ENCODE measurements at regions of chr12 and their contacts with region 1.

Region 1: DNA sequence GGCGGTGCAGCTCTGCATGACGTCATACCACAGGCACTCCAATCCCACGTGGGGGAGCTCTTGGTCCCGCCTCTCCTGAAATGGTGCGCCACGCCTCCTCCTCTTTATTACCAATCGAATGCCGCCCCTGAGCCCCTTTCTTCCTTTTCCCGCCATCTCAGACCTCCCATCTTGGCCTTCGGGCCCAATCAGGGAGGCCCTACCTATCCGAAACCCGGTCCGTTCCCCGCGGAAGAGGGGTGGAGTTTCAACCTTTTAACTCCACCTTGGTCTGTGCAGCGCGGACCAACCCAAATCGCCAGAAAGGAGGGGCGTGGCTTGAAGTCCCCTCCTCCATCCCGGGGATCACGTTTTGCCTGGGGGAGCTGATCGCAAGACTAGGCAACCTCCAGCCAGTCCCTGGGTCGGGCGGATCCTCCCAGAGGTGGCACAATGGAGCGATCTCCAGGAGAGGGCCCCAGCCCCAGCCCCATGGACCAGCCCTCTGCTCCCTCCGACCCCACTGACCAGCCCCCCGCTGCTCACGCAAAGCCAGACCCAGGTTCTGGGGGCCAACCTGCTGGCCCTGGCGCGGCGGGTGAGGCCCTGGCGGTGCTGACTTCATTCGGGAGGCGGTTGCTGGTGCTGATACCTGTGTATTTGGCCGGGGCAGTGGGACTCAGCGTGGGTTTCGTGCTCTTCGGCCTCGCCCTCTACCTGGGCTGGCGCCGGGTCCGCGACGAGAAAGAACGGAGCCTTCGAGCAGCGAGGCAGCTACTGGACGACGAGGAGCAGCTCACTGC is at the start of gene ESYT1:
- DNase-seq: peak; percentile 94 to 99 (median 99)
- H3K4me3 ChIP-seq: peak within 1 kb of the TSS; percentile 90
- H3K4me3 Mint-ChIP-seq: peak within 1 kb of the TSS; percentile 86 to 99 (median 98)
- H3K27ac ChIP-seq: peak within 1 kb of the TSS; percentile 90
- H3K27ac Mint-ChIP-seq: peak within 1 kb of the TSS; percentile 90 to 99 (median 98)
- H3K4me1 ChIP-seq: peaks cover 50% of the 10 kb centered on the region
- H3K4me1 Mint-ChIP-seq: peaks cover 59 to 71% (median 69%) of the 10 kb centered on the region in 3 donors
- H3K27me3 ChIP-seq: no peaks in the 10 kb centered on the region
- H3K27me3 Mint-ChIP-seq: peaks cover 0 to 2% of the 10 kb centered on the region in 2 donors
- total RNA-seq, gene ESYT1: 185 to 191 TPM

Region 2: GRCh38 chr12:56104109-56104814 is 23.8 kb before region 1 on chr12 and contains the start of gene PA2G4:
- CTCF ChIA-PET with region 1: interaction called, 8 read pairs
- POLR2A ChIA-PET with region 1: interaction called, 23 read pairs
- DNase-seq: peak; percentile 90 to 98 (median 96)
- H3K4me3 ChIP-seq: peak within 1 kb of the TSS; percentile 79
- H3K4me3 Mint-ChIP-seq: peak within 1 kb of the TSS; percentile 97 to 100 (median 98)
- H3K27ac ChIP-seq: peak within 1 kb of the TSS; percentile 82
- H3K27ac Mint-ChIP-seq: peak within 1 kb of the TSS; percentile 95 to 99 (median 98)
- H3K4me1 ChIP-seq: peaks cover 40% of the 10 kb centered on the region
- H3K4me1 Mint-ChIP-seq: peaks cover 61 to 68% (median 62%) of the 10 kb centered on the region in 3 donors
- H3K27me3 ChIP-seq: no peaks in the 10 kb centered on the region
- H3K27me3 Mint-ChIP-seq: no peaks in the 10 kb centered on the region
- total RNA-seq, gene PA2G4: 468 to 504 TPM

Region 3: DNA sequence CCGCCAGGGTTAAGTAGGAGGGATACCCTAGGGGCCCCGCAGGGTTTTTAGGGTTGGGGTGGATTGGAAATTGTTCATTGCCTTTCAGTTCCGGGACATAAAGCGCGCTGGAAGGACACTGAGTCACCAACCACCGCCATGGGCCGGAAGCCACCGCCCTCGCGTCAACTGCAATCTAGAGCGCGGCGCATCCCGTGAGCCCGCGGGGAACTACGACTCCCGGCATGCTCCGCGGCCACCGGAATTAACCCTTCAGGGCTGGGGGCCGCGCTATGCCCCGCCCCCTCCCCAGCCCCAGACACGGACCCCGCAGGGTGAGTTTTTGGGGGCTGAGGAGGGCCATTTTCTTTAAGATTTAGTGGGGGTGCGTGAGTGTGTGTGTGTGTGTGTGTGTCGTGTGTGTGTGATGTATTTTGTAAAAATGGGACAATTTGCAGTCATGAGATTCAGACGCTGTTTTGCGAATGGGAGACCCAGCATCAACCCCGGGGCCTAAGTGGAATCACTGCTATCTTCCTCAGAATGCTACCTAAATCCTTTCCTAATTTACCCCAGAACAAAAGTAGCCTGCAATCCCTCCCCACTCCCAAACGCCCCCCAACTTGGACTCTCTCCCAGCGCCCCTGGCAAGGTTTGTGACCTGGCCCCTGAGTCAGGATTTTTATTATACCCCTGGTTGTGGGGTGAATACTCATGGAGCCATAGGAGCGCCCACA is 24.4 kb after region 1 on chr12 and contains the start of gene MYL6B:
- CTCF ChIA-PET with region 1: interaction called, 22 read pairs
- POLR2A ChIA-PET with region 1: interaction called, 19 read pairs
- DNase-seq: peak; percentile 84 to 94 (median 87)
- H3K4me3 ChIP-seq: peak within 1 kb of the TSS; percentile 60
- H3K4me3 Mint-ChIP-seq: peak within 1 kb of the TSS; percentile 89 to 98 (median 91)
- H3K27ac ChIP-seq: peak within 1 kb of the TSS; percentile 80
- H3K27ac Mint-ChIP-seq: peak within 1 kb of the TSS; percentile 94 to 98 (median 97)
- H3K4me1 ChIP-seq: peaks cover 29% of the 10 kb centered on the region
- H3K4me1 Mint-ChIP-seq: peaks cover 33 to 38% (median 35%) of the 10 kb centered on the region in 3 donors
- H3K27me3 ChIP-seq: no peaks in the 10 kb centered on the region
- H3K27me3 Mint-ChIP-seq: no peaks in the 10 kb centered on the region
- total RNA-seq, gene MYL6B: 68.6 to 70.0 TPM

Region 4: DNA sequence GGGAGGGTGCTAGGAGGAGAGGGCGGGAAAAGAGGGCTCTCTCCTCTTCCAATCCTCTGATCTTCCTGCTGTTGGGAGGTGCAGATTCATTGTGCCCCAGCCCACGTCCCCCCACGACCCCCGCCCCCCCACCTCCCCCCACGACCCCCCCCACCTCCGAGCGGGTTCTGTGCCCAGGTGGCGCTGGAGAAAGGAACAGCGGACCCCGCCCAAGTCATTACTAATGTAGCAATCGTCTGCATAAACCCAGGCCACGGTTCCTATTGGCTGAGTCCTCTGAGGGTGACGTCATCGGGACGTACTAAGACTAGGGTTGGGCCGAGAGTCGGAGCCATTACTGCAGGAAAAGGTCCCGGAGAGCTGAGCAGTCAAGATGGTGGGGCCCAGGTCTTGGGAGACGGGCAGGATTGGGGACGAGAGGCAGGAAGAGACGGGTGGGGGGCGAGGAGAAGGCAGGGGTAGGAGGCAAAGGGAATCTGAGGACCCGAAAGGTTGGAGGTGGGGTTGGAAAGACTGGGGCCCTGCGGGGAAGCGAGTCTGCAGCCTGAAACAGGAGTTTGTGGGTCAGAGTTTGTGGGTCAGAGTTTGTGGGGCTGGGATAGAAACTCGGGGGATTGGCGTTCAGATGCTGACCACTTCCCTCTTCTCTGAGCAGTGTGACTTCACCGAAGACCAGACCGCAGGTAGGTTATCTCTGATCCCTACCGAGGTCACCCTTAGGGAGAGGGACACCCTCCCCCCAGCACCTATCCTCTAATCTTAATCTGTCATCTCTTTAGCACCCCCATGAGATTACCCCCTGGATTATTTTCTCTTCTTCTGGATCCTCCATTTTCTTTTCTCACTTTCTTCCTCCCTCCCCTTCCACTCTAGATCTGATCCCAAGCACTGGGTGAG is 30.2 kb after region 1 on chr12 and contains the start of gene MYL6:
- CTCF ChIA-PET with region 1: interaction called, 24 read pairs
- POLR2A ChIA-PET with region 1: interaction called, 25 read pairs
- DNase-seq: peak; percentile 84 to 96 (median 88)
- H3K4me3 ChIP-seq: peak within 1 kb of the TSS; percentile 80
- H3K4me3 Mint-ChIP-seq: peak within 1 kb of the TSS; percentile 92 to 100 (median 95)
- H3K27ac ChIP-seq: peak within 1 kb of the TSS; percentile 94
- H3K27ac Mint-ChIP-seq: peak within 1 kb of the TSS; percentile 87 to 100 (median 96)
- H3K4me1 ChIP-seq: peaks cover 38% of the 10 kb centered on the region
- H3K4me1 Mint-ChIP-seq: peaks cover 38 to 48% (median 41%) of the 10 kb centered on the region in 3 donors
- H3K27me3 ChIP-seq: no peaks in the 10 kb centered on the region
- H3K27me3 Mint-ChIP-seq: no peaks in the 10 kb centered on the region
- total RNA-seq, gene MYL6: 1,010 to 1,017 TPM

Region 5: GRCh38 chr12:56224102-56224701 is 96.1 kb after region 1 on chr12 and contains the start of gene NABP2:
- CTCF ChIA-PET with region 1: interaction called, 13 read pairs
- POLR2A ChIA-PET with region 1: interaction called, 14 read pairs
- DNase-seq: peak; percentile 90 to 94 (median 92)
- H3K4me3 ChIP-seq: peak within 1 kb of the TSS; percentile 67
- H3K4me3 Mint-ChIP-seq: peak within 1 kb of the TSS; percentile 86 to 99 (median 93)
- H3K27ac ChIP-seq: peak within 1 kb of the TSS; percentile 62
- H3K27ac Mint-ChIP-seq: peak within 1 kb of the TSS; percentile 90 to 100 (median 100)
- H3K4me1 ChIP-seq: peaks cover 34% of the 10 kb centered on the region
- H3K4me1 Mint-ChIP-seq: peaks cover 42 to 55% (median 53%) of the 10 kb centered on the region in 3 donors
- H3K27me3 ChIP-seq: no peaks in the 10 kb centered on the region
- H3K27me3 Mint-ChIP-seq: peaks cover 0 to 2% of the 10 kb centered on the region in 2 donors
- total RNA-seq, gene NABP2: 102 to 104 TPM

Measured in CD8-positive, alpha-beta memory T cell (primary cell).